T-cell (primary cell): ENCODE measurements at regions of chr4 and their contacts with region 1.

Region 1: DNA sequence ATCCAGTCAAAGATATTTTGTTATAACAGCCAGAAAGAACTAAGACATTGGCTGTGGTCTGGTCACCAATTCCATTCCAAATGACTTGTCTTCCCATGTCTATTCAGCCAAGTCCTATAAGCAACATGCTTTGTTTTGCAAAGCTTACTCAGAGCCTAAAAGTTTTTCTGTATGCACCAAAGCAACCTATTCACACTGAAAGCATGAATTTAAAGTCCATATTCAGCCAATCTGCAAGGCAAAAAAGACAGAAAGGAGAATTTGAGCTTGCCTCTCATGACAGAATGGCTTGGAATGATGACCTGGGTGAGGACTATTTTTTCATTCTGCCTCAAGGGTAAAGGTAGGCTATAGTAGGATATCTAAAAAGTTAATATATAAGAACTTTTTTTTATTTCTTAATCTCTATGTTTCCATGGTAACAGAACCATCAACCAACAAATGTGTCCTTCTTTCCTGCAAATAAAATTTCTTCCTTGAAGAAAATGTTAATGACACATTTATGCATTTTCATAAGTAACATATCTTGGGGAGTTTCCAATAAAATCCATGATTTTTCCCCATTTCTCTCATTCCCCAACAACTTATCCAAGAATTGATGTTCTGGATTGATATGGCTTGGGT is 323.1 kb upstream of the NOCT start:
- DNase-seq: no peak
- ATAC-seq: no peak
- H3K4me3 ChIP-seq: no peak overlapping the region
- H3K4me3 Mint-ChIP-seq: no peak overlapping the region
- H3K27ac ChIP-seq: no peak overlapping the region
- H3K27ac Mint-ChIP-seq: no peak overlapping the region
- H3K4me1 ChIP-seq: no peaks in the 10 kb centered on the region
- H3K4me1 Mint-ChIP-seq: no peaks in the 10 kb centered on the region
- H3K27me3 ChIP-seq: no peaks in the 10 kb centered on the region
- H3K27me3 Mint-ChIP-seq: peaks cover 8 to 22% of the 10 kb centered on the region in 2 donors

Region 2: DNA sequence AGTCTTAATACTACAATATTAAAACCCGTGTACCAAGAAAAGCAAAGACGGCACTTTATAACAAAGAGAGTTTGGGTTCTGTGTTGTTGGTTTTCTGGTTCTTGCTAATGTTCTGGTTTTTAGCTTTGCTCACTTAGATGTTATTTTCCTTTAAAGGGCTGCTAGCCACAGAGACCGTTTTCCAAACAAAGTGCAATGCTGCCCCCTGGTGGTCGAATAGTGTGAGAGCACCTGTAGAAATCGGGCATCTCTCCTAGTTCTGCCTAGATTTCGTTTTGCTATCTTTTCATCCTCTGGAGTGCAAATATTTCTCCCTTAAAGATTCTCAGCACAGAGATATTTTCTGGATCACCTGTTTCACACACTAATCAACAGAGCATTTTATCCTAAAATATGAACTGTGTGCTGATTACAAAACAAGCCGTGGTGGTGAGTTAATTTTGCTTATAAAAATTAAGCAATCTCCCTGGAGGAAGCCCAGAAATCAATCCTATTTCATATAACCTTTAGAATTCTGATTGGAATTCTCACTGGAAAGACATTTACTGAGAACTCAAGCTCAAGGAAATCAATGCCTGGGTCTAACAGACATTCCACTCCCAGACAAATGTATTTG is 11.4 kb before region 1 on chr4:
- CTCF ChIA-PET with region 1: interaction called in 1 of 2 experiments, 11 read pairs
- POLR2A ChIA-PET with region 1: no interaction called
- DNase-seq: peak in 34 of 35 experiments; percentile 3 to 73 (median 50)
- ATAC-seq: no peak
- H3K4me3 ChIP-seq: no peak overlapping the region
- H3K4me3 Mint-ChIP-seq: no peak overlapping the region
- H3K27ac ChIP-seq: no peak overlapping the region
- H3K27ac Mint-ChIP-seq: no peak overlapping the region
- H3K4me1 ChIP-seq: no peaks in the 10 kb centered on the region
- H3K4me1 Mint-ChIP-seq: peaks cover 0 to 3% (median 0%) of the 10 kb centered on the region in 3 donors
- H3K27me3 ChIP-seq: peaks cover 0 to 3% of the 10 kb centered on the region in 2 experiments
- H3K27me3 Mint-ChIP-seq: peaks cover 6 to 12% of the 10 kb centered on the region in 2 donors

Region 3: DNA sequence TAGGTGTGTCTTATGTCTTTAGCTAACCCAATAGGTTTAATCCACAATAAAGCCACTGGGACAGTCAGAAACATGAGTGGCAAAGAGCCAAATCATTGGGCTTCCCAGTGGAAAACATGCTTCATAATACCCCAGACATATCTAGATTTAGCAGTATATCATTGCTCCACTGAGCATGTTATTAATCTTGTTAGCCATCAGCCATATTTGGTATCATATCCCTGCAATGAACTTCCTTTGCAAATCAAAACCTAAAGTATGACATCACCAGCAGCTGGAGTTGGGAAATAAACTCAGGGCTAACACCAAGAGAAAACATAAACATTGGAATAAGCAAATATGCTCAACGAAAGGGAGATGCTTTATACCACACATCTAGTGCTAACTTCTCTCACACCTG is 42.2 kb after region 1 on chr4:
- CTCF ChIA-PET with region 1: no interaction called
- POLR2A ChIA-PET with region 1: no interaction called
- DNase-seq: no peak
- ATAC-seq: no peak
- H3K4me3 ChIP-seq: no peak overlapping the region
- H3K4me3 Mint-ChIP-seq: no peak overlapping the region
- H3K27ac ChIP-seq: no peak overlapping the region
- H3K27ac Mint-ChIP-seq: no peak overlapping the region
- H3K4me1 ChIP-seq: no peaks in the 10 kb centered on the region
- H3K4me1 Mint-ChIP-seq: no peaks in the 10 kb centered on the region
- H3K27me3 ChIP-seq: no peaks in the 10 kb centered on the region
- H3K27me3 Mint-ChIP-seq: peaks cover 0 to 6% of the 10 kb centered on the region in 2 donors

Region 4: GRCh38 chr4:138938366-138938690 is 245.8 kb after region 1 on chr4:
- CTCF ChIA-PET with region 1: no interaction called
- POLR2A ChIA-PET with region 1: no interaction called
- DNase-seq: peak in 1 of 35 experiments; percentile 4
- ATAC-seq: no peak
- H3K4me3 ChIP-seq: no peak overlapping the region
- H3K4me3 Mint-ChIP-seq: no peak overlapping the region
- H3K27ac ChIP-seq: no peak overlapping the region
- H3K27ac Mint-ChIP-seq: no peak overlapping the region
- H3K4me1 ChIP-seq: no peaks in the 10 kb centered on the region
- H3K4me1 Mint-ChIP-seq: peaks cover 0 to 2% (median 0%) of the 10 kb centered on the region in 3 donors
- H3K27me3 ChIP-seq: peaks cover 0 to 3% of the 10 kb centered on the region in 2 experiments
- H3K27me3 Mint-ChIP-seq: peaks cover 0 to 1% of the 10 kb centered on the region in 2 donors